ENCODE measurements at regions of chr10 and their contacts with region 1.

Region 1: GRCh38 chr10:67849331-67850011 is 11.5 kb upstream of the DNAJC12 start:
- DNase-seq: peak; percentile 81 to 94
- H3K4me3 ChIP-seq: peak overlapping the region; percentile 85 to 93 (median 89)
- H3K27ac ChIP-seq: peak overlapping the region; percentile 66
- H3K4me1 ChIP-seq: no peaks in the 10 kb centered on the region
- H3K27me3 ChIP-seq: no peaks in the 10 kb centered on the region
- CTCF ChIP-seq: peak in 1 of 3 experiments; percentile 2; a peak in 1 of 4 replicates
- EP300 ChIP-seq: no peak
- POLR2A ChIP-seq: peak in 1 of 2 experiments; percentile 83; a peak in 2 of 3 replicates
- RAD21 ChIP-seq: no peak

Region 2: DNA sequence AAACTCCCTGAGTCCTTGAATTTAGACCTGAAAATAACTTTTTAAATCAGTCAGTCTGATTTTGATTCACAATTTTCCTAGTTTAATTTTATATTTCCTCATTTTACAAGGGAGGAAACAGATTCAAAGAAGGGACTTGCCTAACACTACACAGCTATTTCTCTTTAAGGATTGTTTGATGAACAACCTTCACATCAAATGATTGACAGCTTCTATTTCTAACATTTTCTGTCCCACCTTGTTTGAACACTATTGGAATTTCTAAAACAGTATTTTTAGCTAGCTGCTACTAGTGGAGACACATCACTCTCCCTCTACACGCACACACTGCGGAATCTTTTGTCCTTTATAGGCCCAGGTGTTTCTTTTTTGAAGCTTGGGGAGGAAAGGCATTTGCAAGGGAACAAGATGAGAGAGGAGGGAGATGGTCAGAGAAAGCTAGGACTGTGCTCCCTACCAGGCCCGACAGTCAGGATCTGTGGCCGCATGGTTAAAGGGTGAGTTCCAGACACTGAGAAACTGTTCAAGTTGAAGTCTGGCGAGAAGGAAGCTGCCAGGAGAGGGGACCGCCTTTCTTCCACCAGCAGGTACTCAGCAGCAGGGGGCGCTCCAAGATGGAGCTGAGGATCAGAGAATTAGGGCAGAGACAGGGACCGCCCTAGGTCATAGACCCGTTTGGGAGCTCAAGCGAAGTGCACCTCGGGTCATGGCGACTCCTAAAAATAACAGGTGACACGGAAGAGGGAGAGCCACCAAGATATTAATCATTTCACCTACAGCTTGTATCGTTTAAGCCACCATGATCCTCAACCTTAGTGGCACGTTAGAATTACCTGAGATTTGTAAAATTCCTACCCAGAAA is 61.2 kb before region 1 on chr10:
- CTCF ChIA-PET with region 1: interaction called, 15 read pairs
- POLR2A ChIA-PET with region 1: no interaction called
- DNase-seq: peak; percentile 56 to 94
- H3K4me3 ChIP-seq: no peak overlapping the region
- H3K27ac ChIP-seq: no peak overlapping the region
- H3K4me1 ChIP-seq: peaks cover 0 to 6% (median 2%) of the 10 kb centered on the region in 4 experiments; a peak in 5 of 7 replicates
- H3K27me3 ChIP-seq: no peaks in the 10 kb centered on the region
- CTCF ChIP-seq: peak; percentile 85 to 91 (median 86)
- EP300 ChIP-seq: no peak
- POLR2A ChIP-seq: no peak
- RAD21 ChIP-seq: peak; percentile 87 to 88

Region 3: DNA sequence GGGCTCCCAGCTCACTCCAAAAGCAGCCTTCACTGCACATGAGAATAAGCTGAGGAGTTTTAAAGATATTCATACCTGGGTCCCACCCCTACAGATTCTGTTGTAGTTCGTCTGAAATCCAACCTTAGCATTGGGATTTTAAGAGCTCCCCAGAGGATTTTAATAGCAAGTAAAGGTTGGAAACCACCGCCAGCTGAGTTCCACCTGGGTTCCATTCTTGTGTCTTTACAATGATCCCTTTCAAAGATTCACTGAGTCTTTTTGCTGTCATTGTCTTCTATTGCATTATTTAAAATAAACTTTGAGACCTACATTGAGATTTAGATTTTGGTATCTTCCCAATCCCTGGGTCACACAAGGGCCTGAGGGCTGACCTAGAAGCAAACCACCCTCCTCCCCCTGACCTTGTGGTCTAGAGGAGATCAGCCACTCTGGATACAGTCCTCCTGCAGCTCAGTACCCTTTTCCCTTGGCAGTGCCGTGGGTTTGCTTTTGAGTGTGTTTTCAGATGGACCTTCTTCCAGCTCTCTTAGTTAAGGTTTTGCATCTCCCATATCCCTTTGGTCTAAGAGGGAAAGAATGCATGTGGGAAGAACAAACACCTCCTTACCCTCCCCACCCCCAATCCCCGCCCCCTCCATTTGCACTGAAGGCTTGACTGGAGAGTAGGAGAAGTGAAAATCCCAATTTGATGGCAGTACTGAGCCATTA is 12.4 kb after region 1 on chr10:
- CTCF ChIA-PET with region 1: interaction called, 14 read pairs
- POLR2A ChIA-PET with region 1: interaction called, 6 read pairs
- DNase-seq: peak; percentile 59 to 67
- H3K4me3 ChIP-seq: peak overlapping the region in 3 of 4 experiments; percentile 20 to 48 (median 35); a peak in 5 of 8 replicates
- H3K27ac ChIP-seq: peak overlapping the region; percentile 36
- H3K4me1 ChIP-seq: peaks cover 2 to 11% (median 10%) of the 10 kb centered on the region in 4 experiments; a peak in 6 of 7 replicates
- H3K27me3 ChIP-seq: no peaks in the 10 kb centered on the region; a peak in 1 of 7 replicates
- CTCF ChIP-seq: no peak
- EP300 ChIP-seq: peak in 1 of 2 experiments; percentile 5; a peak in 1 of 3 replicates
- POLR2A ChIP-seq: peak; percentile 47 to 61
- RAD21 ChIP-seq: no peak

Region 4: GRCh38 chr10:67884313-67884841 is 34.9 kb after region 1 on chr10 and contains the start of gene SIRT1:
- CTCF ChIA-PET with region 1: interaction called, 17 read pairs
- POLR2A ChIA-PET with region 1: interaction called, 25 read pairs
- DNase-seq: peak; percentile 88 to 96
- H3K4me3 ChIP-seq: peak within 1 kb of the TSS; percentile 90 to 100 (median 94)
- H3K27ac ChIP-seq: peak within 1 kb of the TSS; percentile 77
- H3K4me1 ChIP-seq: peaks cover 0 to 6% (median 5%) of the 10 kb centered on the region in 4 experiments; a peak in 5 of 7 replicates
- H3K27me3 ChIP-seq: no peaks in the 10 kb centered on the region
- CTCF ChIP-seq: no peak
- EP300 ChIP-seq: peak in 1 of 2 experiments; percentile 37; a peak in 1 of 3 replicates
- POLR2A ChIP-seq: peak; percentile 99
- RAD21 ChIP-seq: peak in 1 of 2 experiments; percentile 19; a peak in 3 of 4 replicates
- total RNA-seq, gene SIRT1: 66.2 and 70.9 TPM in 2 replicates

Region 5: GRCh38 chr10:67912339-67912946 is 63.0 kb after region 1 on chr10:
- CTCF ChIA-PET with region 1: interaction called, 14 read pairs
- POLR2A ChIA-PET with region 1: no interaction called
- DNase-seq: no peak
- H3K4me3 ChIP-seq: no peak overlapping the region
- H3K27ac ChIP-seq: no peak overlapping the region
- H3K4me1 ChIP-seq: no peaks in the 10 kb centered on the region
- H3K27me3 ChIP-seq: no peaks in the 10 kb centered on the region
- CTCF ChIP-seq: no peak
- EP300 ChIP-seq: no peak
- POLR2A ChIP-seq: no peak
- RAD21 ChIP-seq: no peak

Region 6: DNA sequence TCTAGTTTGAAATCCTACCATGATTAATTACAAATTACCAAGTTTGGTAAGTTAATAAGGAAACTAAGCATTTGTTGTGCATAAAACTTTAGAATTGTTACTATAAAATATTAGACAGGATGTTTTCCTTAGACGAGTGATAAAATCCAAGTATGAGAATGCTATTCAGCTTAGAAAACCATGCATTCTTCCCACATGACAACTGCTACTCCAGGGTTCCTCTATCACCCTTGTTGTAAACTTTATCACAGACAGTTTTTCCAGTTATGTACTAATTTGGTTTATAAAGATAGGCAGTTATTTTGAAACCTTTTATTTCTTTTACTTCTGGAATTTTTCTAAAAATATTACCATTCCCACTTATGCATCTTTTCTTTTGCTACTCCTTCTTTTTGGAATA is 86.9 kb after region 1 on chr10:
- CTCF ChIA-PET with region 1: interaction called, 15 read pairs
- POLR2A ChIA-PET with region 1: no interaction called
- DNase-seq: no peak
- H3K4me3 ChIP-seq: no peak overlapping the region
- H3K27ac ChIP-seq: no peak overlapping the region
- H3K4me1 ChIP-seq: no peaks in the 10 kb centered on the region; a peak in 1 of 7 replicates
- H3K27me3 ChIP-seq: no peaks in the 10 kb centered on the region
- CTCF ChIP-seq: no peak
- EP300 ChIP-seq: no peak
- POLR2A ChIP-seq: no peak
- RAD21 ChIP-seq: no peak

Region 7: DNA sequence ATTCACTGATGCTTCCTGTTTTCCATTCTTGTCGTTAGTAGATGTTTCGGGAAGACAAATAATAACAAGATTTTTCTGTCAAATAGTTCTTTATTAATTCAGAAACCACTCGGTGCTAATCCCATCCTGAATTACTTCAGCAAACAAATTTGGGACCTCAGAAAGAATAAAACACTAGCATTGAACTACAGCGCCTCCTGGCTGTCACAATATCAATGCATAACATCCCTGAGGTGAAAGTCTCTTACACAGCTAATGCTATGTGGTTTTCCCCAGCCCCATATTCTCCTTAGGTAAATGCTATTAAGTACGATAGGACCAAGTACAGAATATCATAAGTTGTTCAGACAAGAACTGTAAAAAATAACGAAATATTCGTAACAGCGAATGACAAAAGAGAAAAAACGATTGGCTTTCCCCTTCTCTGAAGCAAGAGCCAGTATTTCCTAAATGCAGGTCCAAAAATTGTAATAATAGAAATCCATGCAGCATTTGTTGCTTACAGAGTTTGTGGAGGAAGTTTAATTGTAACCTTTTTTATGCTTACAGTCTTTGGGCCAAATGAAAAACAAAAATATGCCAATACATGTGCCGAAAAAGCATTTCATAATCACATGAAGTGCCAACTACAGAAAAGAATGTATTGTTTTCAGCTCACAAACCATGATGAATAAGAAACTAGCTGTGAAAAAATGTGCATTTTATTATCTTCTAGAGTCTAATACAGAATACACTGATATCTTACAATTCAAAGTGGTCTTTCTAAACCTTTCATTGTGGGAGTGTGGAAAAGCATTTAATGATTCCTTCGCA is 307.1 kb after region 1 on chr10:
- CTCF ChIA-PET with region 1: interaction called, 11 read pairs
- POLR2A ChIA-PET with region 1: no interaction called
- DNase-seq: no peak
- H3K4me3 ChIP-seq: no peak overlapping the region
- H3K27ac ChIP-seq: no peak overlapping the region
- H3K4me1 ChIP-seq: peaks cover 0 to 12% (median 9%) of the 10 kb centered on the region in 4 experiments; a peak in 5 of 7 replicates
- H3K27me3 ChIP-seq: no peaks in the 10 kb centered on the region
- CTCF ChIP-seq: peak in 2 of 3 experiments; percentile 57 to 77; a peak in 3 of 4 replicates
- EP300 ChIP-seq: no peak
- POLR2A ChIP-seq: no peak
- RAD21 ChIP-seq: peak; percentile 80 to 83